ENCODE measurements at regions of chr6 and their contacts with region 1.

Region 1: DNA sequence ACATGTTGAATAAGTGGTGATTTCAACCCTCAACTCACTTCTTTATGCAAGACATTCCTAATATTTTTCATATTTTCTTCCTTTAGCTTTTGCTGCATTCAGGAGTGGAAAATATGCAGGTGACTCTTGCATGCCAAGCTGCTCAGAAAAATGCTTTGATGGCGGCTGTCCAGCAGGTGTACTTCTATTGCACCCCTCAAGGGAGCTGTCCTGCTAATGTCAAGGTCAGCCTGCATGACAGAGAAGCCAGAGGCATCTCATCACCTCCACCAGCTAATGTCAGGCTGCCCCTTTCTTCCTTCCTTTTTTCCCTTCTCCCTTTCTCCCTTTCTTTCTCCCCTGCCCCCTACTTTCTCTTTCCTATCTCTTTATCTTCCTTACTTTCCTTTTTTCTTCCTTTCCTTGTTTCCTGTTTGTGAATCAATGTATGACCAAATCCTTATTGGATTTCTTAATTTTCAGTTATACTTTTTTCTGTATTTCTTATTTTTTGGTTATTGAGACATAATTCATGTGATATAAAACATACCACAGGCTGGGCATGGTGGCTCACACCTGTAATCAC is 112.2 kb downstream of the CD164 start:
- DNase-seq: no peak
- ATAC-seq: no peak
- H3K4me3 Mint-ChIP-seq: no peak overlapping the region
- H3K27ac Mint-ChIP-seq: no peak overlapping the region
- H3K4me1 Mint-ChIP-seq: no peaks in the 10 kb centered on the region
- H3K27me3 Mint-ChIP-seq: no peaks in the 10 kb centered on the region

Region 2: GRCh38 chr6:107769053-107769658 is 1500.9 kb before region 1 on chr6:
- CTCF ChIA-PET with region 1: no interaction called
- POLR2A ChIA-PET with region 1: no interaction called
- intact Hi-C with region 1: loop called in 1 of 2 experiments (anchors 10 kb)
- DNase-seq: no peak
- ATAC-seq: no peak
- H3K4me3 Mint-ChIP-seq: no peak overlapping the region
- H3K27ac Mint-ChIP-seq: no peak overlapping the region
- H3K4me1 Mint-ChIP-seq: peaks cover 34% of the 10 kb centered on the region
- H3K27me3 Mint-ChIP-seq: no peaks in the 10 kb centered on the region

Region 3: GRCh38 chr6:109644131-109644530 is 374.1 kb after region 1 on chr6:
- CTCF ChIA-PET with region 1: no interaction called
- POLR2A ChIA-PET with region 1: no interaction called
- intact Hi-C with region 1: no loop called
- DNase-seq: no peak
- ATAC-seq: no peak
- H3K4me3 Mint-ChIP-seq: no peak overlapping the region
- H3K27ac Mint-ChIP-seq: no peak overlapping the region
- H3K4me1 Mint-ChIP-seq: no peaks in the 10 kb centered on the region
- H3K27me3 Mint-ChIP-seq: no peaks in the 10 kb centered on the region